IMR-90 (cell line): ENCODE measurements at regions of chr3 and their contacts with region 1.

Region 1: GRCh38 chr3:186930641-186931531 is 560 bp downstream of the ST6GAL1 start:
- DNase-seq: peak; percentile 34
- ATAC-seq: peak; percentile 53
- H3K4me3 ChIP-seq: peak overlapping the region; percentile 53
- H3K27ac ChIP-seq: peak overlapping the region; percentile 19; the same call in 1 of the 2 replicates
- H3K4me1 ChIP-seq: no peaks in the 10 kb centered on the region; the same call in 1 of the 2 replicates
- H3K27me3 ChIP-seq: peaks cover 12% of the 10 kb centered on the region
- CTCF ChIP-seq: no peak
- POLR2A ChIP-seq: no peak
- RAD21 ChIP-seq: no peak

Region 2: GRCh38 chr3:187101184-187102072 is 170.5 kb after region 1 on chr3:
- CTCF ChIA-PET with region 1: interaction called, 3 read pairs
- POLR2A ChIA-PET with region 1: no interaction called
- dilution Hi-C with region 1: no loop called
- in situ Hi-C with region 1: no loop called
- intact Hi-C with region 1: loop called (anchors 1 kb)
- DNase-seq: peak; percentile 71
- ATAC-seq: peak; percentile 78
- H3K4me3 ChIP-seq: peak overlapping the region; percentile 41; the same call in 1 of the 2 replicates
- H3K27ac ChIP-seq: peak overlapping the region; percentile 27; the same call in 1 of the 2 replicates
- H3K4me1 ChIP-seq: peaks cover 5% of the 10 kb centered on the region
- H3K27me3 ChIP-seq: no peaks in the 10 kb centered on the region
- CTCF ChIP-seq: no peak
- POLR2A ChIP-seq: no peak
- RAD21 ChIP-seq: no peak